CD8-positive, alpha-beta T cell (primary cell): ENCODE measurements at regions of chr3 and their contacts with region 1.

Region 1: GRCh38 chr3:187540847-187541246 is 129.3 kb downstream of the SST start:
- DNase-seq: no peak
- ATAC-seq: no peak
- H3K4me3 ChIP-seq: no peak overlapping the region
- H3K4me3 Mint-ChIP-seq: no peak overlapping the region
- H3K27ac ChIP-seq: no peak overlapping the region
- H3K27ac Mint-ChIP-seq: no peak overlapping the region
- H3K4me1 ChIP-seq: no peaks in the 10 kb centered on the region
- H3K4me1 Mint-ChIP-seq: no peaks in the 10 kb centered on the region
- H3K27me3 ChIP-seq: no peaks in the 10 kb centered on the region
- H3K27me3 Mint-ChIP-seq: peaks cover 8% of the 10 kb centered on the region
- CTCF ChIP-seq: no peak

Region 2: DNA sequence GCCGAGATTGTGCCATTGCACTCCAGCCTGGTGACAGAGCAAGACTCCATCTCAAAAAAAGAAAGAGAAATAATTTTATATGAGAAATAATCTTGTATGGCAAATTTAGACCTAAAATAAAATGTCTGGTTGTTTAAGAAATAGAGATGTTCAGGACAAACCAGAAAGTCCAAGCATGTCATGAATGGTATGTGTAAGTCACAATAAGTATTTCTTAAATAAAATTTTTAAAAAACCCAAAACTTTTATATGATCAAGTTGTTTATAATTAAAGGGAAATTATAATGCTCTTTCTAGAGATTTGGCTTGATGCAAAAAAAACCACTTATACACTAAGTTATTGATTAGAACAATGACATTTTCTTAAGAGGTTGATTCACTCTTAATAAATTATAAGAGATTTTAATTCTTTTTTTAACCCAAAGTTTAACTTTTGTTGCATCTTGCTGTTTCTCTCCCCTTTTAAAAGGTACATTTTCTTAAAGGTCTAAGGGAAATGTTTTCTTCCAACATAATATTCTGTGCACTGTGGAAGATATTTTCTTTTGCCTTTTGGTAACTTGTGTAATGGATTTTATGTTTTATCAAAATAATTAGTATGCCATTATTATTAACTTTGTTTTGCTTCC is 67.0 kb before region 1 on chr3:
- CTCF ChIA-PET with region 1: no interaction called
- POLR2A ChIA-PET with region 1: no interaction called
- intact Hi-C with region 1: loop called in 1 of 2 experiments (anchors 2 kb)
- DNase-seq: no peak
- ATAC-seq: no peak
- H3K4me3 ChIP-seq: no peak overlapping the region
- H3K4me3 Mint-ChIP-seq: no peak overlapping the region
- H3K27ac ChIP-seq: no peak overlapping the region
- H3K27ac Mint-ChIP-seq: no peak overlapping the region
- H3K4me1 ChIP-seq: no peaks in the 10 kb centered on the region
- H3K4me1 Mint-ChIP-seq: no peaks in the 10 kb centered on the region
- H3K27me3 ChIP-seq: no peaks in the 10 kb centered on the region
- H3K27me3 Mint-ChIP-seq: peaks cover 13% of the 10 kb centered on the region
- CTCF ChIP-seq: no peak

Region 3: DNA sequence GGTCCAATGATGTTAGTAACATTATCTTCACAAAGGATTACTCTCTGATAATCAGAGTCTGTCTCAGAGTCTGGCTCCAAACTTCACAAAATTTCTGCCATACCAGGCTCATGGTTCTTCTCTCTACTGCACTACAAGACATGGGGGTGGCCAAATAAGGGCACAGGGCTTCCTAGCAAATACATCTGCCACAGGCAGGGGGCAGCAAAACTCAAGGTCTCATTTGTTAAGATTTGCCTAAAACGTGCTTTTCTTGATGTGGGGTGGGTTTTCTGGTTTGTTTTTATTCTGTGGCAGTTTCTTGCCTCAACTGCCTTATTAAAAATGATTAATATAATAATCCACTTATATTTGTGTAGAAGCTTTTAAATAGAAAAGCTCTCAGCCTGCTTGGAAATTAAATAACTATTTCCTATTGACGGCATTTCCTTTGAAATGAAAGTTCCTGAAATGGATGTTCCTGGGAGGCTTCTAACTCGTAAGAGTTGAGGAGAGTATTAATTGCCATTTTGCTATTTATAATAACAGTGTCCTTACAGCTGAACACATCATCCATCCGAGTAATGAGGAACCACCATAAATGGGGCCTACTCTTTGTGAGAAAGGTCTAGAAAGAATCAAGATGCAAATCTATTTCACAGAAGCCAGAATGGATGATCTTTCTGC is 75.6 kb after region 1 on chr3:
- CTCF ChIA-PET with region 1: no interaction called
- POLR2A ChIA-PET with region 1: no interaction called
- intact Hi-C with region 1: no loop called
- DNase-seq: peak; percentile 7 to 64 (median 44)
- ATAC-seq: peak; percentile 58
- H3K4me3 ChIP-seq: no peak overlapping the region
- H3K4me3 Mint-ChIP-seq: no peak overlapping the region
- H3K27ac ChIP-seq: no peak overlapping the region
- H3K27ac Mint-ChIP-seq: no peak overlapping the region
- H3K4me1 ChIP-seq: peaks cover 9% of the 10 kb centered on the region
- H3K4me1 Mint-ChIP-seq: peaks cover 8% of the 10 kb centered on the region
- H3K27me3 ChIP-seq: no peaks in the 10 kb centered on the region
- H3K27me3 Mint-ChIP-seq: peaks cover 7% of the 10 kb centered on the region
- CTCF ChIP-seq: peak; percentile 70